MCF 10A (cell line): ENCODE measurements at regions of chr4 and their contacts with region 1.

Region 1: DNA sequence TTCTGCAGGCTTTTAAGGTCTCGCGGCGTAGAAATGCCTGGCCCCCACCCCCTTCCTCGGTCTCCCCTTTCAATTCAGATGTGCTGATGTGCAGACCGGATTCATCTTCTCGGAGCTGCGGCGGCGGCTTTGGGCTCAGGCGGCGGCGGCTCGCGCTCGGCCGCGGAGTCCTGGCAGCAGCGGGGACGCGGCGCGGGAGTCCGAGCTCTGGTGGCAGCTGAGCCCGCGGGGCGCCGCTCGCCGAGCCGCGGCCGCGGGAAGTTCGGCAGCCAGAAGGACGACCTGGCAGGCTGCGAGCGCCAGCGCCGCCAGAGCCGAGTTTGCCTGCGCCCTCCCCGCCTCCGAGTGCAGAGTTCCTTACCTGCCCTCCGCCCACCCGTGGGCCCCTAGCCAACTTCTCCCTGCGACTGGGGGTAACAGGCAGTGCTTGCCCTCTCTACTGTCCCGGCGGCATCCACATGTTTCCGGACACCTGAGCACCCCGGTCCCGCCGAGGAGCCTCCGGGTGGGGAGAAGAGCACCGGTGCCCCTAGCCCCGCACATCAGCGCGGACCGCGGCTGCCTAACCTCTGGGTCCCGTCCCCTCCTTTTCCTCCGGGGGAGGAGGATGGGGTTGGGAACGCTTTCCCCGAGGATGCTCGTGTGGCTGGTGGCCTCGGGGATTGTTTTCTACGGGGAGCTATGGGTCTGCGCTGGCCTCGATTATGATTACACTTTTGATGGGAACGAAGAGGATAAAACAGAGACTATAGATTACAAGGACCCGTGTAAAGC is 448 bp downstream of the TLL1 start:
- DNase-seq: peak; percentile 45
- H3K4me3 Mint-ChIP-seq: peak overlapping the region; percentile 84
- H3K27ac Mint-ChIP-seq: peak overlapping the region; percentile 59
- H3K4me1 Mint-ChIP-seq: peaks cover 25% of the 10 kb centered on the region
- H3K27me3 Mint-ChIP-seq: no peaks in the 10 kb centered on the region
- CTCF ChIP-seq: no peak

Region 2: GRCh38 chr4:165493359-165493758 is 380.1 kb before region 1 on chr4:
- CTCF ChIA-PET with region 1: interaction called, 10 read pairs
- POLR2A ChIA-PET with region 1: interaction called, 5 read pairs
- intact Hi-C with region 1: no loop called
- DNase-seq: peak; percentile 74
- H3K4me3 Mint-ChIP-seq: no peak overlapping the region
- H3K27ac Mint-ChIP-seq: no peak overlapping the region
- H3K4me1 Mint-ChIP-seq: peaks cover 12% of the 10 kb centered on the region
- H3K27me3 Mint-ChIP-seq: no peaks in the 10 kb centered on the region
- CTCF ChIP-seq: peak; percentile 72

Region 3: DNA sequence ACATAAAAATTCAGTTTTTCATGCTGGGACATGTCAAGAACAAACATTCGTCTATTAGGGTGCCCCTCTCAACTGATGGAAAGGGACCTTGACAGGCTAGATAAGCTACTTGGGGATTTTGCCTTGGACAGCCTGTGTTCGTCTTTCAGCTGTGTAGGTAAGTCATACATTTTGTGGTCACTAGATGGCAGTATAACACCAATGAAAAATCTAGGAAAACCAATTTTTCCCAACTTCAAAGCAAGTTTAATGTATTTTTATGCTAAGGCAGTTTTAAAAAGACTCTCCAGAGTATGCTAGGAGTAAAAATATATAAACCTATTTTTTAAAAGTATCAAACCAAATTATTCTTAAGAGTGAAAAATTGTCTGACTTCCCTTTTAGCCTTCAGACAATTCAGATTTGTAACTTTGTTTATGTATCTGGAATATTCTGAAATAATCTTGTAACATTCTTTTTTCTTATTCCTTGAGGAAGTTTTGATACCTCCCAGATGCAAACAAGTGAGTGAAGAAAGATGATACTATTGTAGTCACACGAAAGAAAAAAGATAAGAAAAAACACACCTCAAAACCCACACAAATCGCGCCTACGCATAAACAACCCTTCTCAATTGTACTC is 336.3 kb before region 1 on chr4:
- CTCF ChIA-PET with region 1: interaction called, 6 read pairs
- POLR2A ChIA-PET with region 1: interaction called, 3 read pairs
- intact Hi-C with region 1: loop called (anchors 5 kb)
- DNase-seq: peak; percentile 58
- H3K4me3 Mint-ChIP-seq: no peak overlapping the region
- H3K27ac Mint-ChIP-seq: no peak overlapping the region
- H3K4me1 Mint-ChIP-seq: no peaks in the 10 kb centered on the region
- H3K27me3 Mint-ChIP-seq: no peaks in the 10 kb centered on the region
- CTCF ChIP-seq: peak; percentile 63

Region 4: DNA sequence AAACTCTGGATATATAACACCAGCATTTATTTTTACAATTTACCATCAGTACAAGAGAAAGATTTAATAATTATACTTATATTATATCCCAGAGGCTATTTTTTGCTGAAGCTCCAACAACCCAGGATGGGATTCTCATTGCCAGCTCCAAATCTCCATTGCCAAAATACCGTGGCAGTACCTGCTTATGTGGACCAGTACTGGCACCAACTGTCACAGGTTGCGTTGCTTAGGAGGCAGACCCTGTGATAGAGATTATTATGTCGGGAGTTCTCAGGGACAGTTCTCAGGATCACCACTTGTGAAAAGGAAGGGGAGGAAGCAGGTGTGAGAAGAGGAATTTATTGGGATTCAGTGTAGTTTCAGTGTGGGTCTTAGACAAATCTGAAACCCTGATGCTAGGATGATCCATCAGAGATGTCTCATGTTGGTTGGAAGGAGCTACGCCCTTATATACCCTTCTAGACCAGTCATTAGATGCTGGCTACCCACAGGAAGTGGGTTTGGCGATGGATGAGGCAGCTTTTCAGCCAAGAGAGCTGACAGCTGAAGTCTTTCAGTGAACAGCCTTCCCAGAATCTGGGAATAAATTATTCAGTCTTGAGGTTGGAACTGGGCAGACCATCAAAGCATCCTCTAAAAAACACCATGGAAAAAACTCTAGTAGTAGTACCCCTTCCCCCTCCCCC is 101.3 kb after region 1 on chr4:
- CTCF ChIA-PET with region 1: interaction called, 3 read pairs
- POLR2A ChIA-PET with region 1: interaction called, 81 read pairs
- intact Hi-C with region 1: loop called (anchors 5 kb)
- DNase-seq: no peak
- H3K4me3 Mint-ChIP-seq: no peak overlapping the region
- H3K27ac Mint-ChIP-seq: no peak overlapping the region
- H3K4me1 Mint-ChIP-seq: peaks cover 27% of the 10 kb centered on the region
- H3K27me3 Mint-ChIP-seq: no peaks in the 10 kb centered on the region
- CTCF ChIP-seq: no peak

Region 5: DNA sequence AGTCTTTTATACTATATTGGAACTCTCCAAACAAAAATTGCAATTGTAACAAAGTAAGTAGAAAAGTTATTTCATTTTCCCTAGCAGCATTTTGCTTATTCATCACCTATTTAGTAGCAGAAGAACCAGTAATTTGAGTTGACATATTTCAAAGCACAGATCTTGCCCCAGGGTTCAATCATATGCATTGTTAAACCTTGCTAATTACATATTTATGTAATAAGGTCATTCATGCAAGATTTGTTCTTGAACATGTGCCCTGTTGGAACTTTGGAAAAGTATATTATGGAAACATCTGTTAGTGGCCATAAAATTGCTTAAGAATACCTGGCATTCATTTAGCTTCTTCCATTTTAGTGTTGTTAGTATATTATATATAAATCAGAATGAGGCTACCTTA is 191.2 kb after region 1 on chr4:
- CTCF ChIA-PET with region 1: interaction called, 4 read pairs
- POLR2A ChIA-PET with region 1: interaction called, 15 read pairs
- intact Hi-C with region 1: no loop called
- DNase-seq: peak; percentile 36
- H3K4me3 Mint-ChIP-seq: no peak overlapping the region
- H3K27ac Mint-ChIP-seq: no peak overlapping the region
- H3K4me1 Mint-ChIP-seq: peaks cover 4% of the 10 kb centered on the region
- H3K27me3 Mint-ChIP-seq: no peaks in the 10 kb centered on the region
- CTCF ChIP-seq: no peak